Activated CD4-positive, alpha-beta T cell treated with anti-CD3 and anti-CD28 coated beads for 36 hours (primary cell): ENCODE measurements at regions of chr2 and their contacts with region 1.

Region 1: GRCh38 chr2:177983183-177983788 is 89.3 kb downstream of the PDE11A start:
- DNase-seq: peak; percentile 43
- ATAC-seq: no peak
- H3K4me3 Mint-ChIP-seq: no peak overlapping the region
- H3K27ac Mint-ChIP-seq: no peak overlapping the region
- H3K4me1 Mint-ChIP-seq: no peaks in the 10 kb centered on the region
- H3K27me3 Mint-ChIP-seq: peaks cover 3% of the 10 kb centered on the region

Region 2: GRCh38 chr2:177906041-177906718 is 77.1 kb before region 1 on chr2:
- CTCF ChIA-PET with region 1: no interaction called
- POLR2A ChIA-PET with region 1: no interaction called
- intact Hi-C with region 1: loop called in 1 of 2 experiments (anchors 2 kb)
- DNase-seq: peak; percentile 87
- ATAC-seq: peak; percentile 95
- H3K4me3 Mint-ChIP-seq: no peak overlapping the region
- H3K27ac Mint-ChIP-seq: no peak overlapping the region
- H3K4me1 Mint-ChIP-seq: peaks cover 3% of the 10 kb centered on the region
- H3K27me3 Mint-ChIP-seq: peaks cover 2% of the 10 kb centered on the region

Region 3: GRCh38 chr2:177929662-177930522 is 53.4 kb before region 1 on chr2:
- CTCF ChIA-PET with region 1: no interaction called
- POLR2A ChIA-PET with region 1: no interaction called
- intact Hi-C with region 1: no loop called
- DNase-seq: no peak
- ATAC-seq: no peak
- H3K4me3 Mint-ChIP-seq: no peak overlapping the region
- H3K27ac Mint-ChIP-seq: no peak overlapping the region
- H3K4me1 Mint-ChIP-seq: no peaks in the 10 kb centered on the region
- H3K27me3 Mint-ChIP-seq: peaks cover 11% of the 10 kb centered on the region

Region 4: DNA sequence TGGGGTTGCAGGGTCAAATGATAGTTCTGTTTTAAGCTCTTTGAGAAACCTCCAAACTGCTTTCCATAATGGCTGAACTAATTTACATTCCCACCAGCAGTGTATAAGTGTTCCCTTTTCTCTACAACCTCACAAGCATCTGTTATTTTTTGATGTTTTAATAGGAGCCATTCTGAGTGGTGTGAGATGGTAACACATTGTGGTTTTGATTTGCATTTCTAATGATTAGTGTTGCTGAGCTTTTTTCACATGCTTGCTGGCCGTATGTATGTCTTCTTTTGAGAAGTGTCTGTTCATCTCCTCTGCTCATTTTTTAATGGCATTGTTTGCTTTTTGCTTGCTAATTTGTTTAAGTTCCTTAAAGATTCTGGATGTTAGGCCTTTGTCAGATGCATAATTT is 18.4 kb before region 1 on chr2:
- CTCF ChIA-PET with region 1: no interaction called
- POLR2A ChIA-PET with region 1: no interaction called
- intact Hi-C with region 1: loop called in 1 of 2 experiments (anchors 2 kb)
- DNase-seq: no peak
- ATAC-seq: no peak
- H3K4me3 Mint-ChIP-seq: no peak overlapping the region
- H3K27ac Mint-ChIP-seq: no peak overlapping the region
- H3K4me1 Mint-ChIP-seq: no peaks in the 10 kb centered on the region
- H3K27me3 Mint-ChIP-seq: peaks cover 7% of the 10 kb centered on the region